Stomach (tissue), 19 donors: ENCODE measurements at regions of chr15 and their contacts with region 1.

Region 1: GRCh38 chr15:91852741-91853510 is 582 bp upstream of the SLCO3A1 start:
- DNase-seq: peak; percentile 76 to 85
- H3K4me3 ChIP-seq: peak overlapping the region; percentile 70 to 80 (median 76)
- H3K27ac ChIP-seq: peak overlapping the region; percentile 87 to 94 (median 93)
- H3K4me1 ChIP-seq: peaks cover 15 to 64% (median 43%) of the 10 kb centered on the region in 4 donors
- H3K27me3 ChIP-seq: peaks cover 0 to 3% (median 0%) of the 10 kb centered on the region in 3 donors
- CTCF ChIP-seq: peak in 5 of 7 experiments; percentile 45 to 90 (median 66)
- EP300 ChIP-seq: no peak
- POLR2A ChIP-seq: no peak

Region 2: GRCh38 chr15:91291673-91292072 is 561.3 kb before region 1 on chr15:
- intact Hi-C with region 1: loop called (anchors 10 kb)
- DNase-seq: peak in 1 of 2 donors; percentile 39
- H3K4me3 ChIP-seq: no peak overlapping the region
- H3K27ac ChIP-seq: no peak overlapping the region
- H3K4me1 ChIP-seq: no peaks in the 10 kb centered on the region
- H3K27me3 ChIP-seq: peaks cover 0 to 30% (median 7%) of the 10 kb centered on the region in 3 donors
- CTCF ChIP-seq: no peak
- EP300 ChIP-seq: no peak
- POLR2A ChIP-seq: no peak

Region 3: DNA sequence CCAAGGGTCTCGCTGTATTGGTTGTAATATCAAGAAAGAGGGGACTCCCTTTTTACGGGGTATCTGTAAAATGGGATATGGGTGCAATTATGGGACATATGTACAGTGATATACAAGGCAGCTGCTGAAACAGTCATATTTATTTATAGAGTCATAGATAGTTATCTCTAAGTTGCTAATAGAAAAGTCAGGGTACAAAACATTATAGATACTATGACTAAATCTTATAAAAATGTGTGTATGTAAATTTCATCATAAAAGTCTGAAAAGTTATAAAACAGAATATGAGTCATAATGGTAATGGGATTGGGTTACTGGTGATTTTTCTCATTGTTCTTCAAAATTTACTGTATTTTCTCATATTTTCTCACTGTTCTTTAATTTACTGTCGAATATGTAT is 344.3 kb before region 1 on chr15:
- intact Hi-C with region 1: no loop called
- DNase-seq: no peak
- H3K4me3 ChIP-seq: no peak overlapping the region
- H3K27ac ChIP-seq: no peak overlapping the region
- H3K4me1 ChIP-seq: no peaks in the 10 kb centered on the region
- H3K27me3 ChIP-seq: no peaks in the 10 kb centered on the region
- CTCF ChIP-seq: no peak
- EP300 ChIP-seq: no peak
- POLR2A ChIP-seq: no peak

Region 4: DNA sequence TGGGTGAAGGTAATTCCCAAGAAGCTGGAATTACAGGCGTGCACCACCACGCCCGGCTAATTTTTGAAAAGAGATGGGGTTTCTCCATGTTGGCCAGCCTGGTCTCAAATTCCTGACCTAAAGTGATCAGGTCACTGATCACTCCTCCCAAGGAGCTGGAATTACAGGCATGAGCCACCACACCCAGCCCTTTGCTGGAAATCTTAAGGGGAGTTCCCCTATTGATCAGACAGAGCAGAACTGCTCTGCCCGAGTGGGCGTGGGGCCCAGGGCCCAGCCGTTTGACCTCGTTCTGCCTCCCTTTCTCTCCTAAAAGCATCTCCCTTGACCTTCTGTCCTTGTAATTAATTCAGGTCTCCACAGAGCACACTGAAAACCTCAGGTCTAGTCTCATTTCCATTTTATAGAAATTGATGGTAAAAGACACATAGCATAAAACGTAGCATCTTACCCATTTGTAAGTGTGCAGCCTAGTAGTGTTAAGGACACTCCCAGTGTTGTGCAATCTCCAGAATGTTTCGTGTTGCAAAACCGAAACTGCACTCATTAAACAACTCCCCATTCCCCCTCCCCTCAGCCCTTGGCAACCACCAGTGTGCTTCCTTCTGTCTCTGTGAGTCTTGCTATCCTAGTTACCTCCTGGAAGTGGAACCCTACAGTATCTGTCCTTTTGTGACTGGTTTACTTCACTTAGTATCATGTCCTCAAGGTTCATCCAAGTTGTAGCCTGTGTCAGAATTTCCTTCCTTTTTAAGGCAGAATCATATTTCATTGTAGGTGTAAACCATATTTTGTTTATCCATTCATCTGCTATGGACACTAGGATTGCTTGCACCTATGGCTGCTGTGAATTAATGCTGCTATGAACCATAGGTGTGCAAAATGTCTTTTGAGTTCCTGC is 90.0 kb after region 1 on chr15:
- intact Hi-C with region 1: loop called (anchors 10 kb)
- DNase-seq: peak; percentile 72 to 95
- H3K4me3 ChIP-seq: peak overlapping the region in 1 of 4 donors; percentile 7
- H3K27ac ChIP-seq: peak overlapping the region; percentile 35 to 77 (median 72)
- H3K4me1 ChIP-seq: peaks cover 17 to 81% (median 48%) of the 10 kb centered on the region in 4 donors
- H3K27me3 ChIP-seq: no peaks in the 10 kb centered on the region
- CTCF ChIP-seq: no peak
- EP300 ChIP-seq: no peak
- POLR2A ChIP-seq: no peak

Region 5: GRCh38 chr15:92077353-92078085 is 224.6 kb after region 1 on chr15:
- intact Hi-C with region 1: loop called (anchors 5 kb)
- DNase-seq: peak; percentile 74 to 87
- H3K4me3 ChIP-seq: no peak overlapping the region
- H3K27ac ChIP-seq: no peak overlapping the region
- H3K4me1 ChIP-seq: peaks cover 5 to 44% (median 15%) of the 10 kb centered on the region in 4 donors
- H3K27me3 ChIP-seq: no peaks in the 10 kb centered on the region
- CTCF ChIP-seq: peak in 5 of 7 experiments; percentile 45 to 70 (median 62)
- EP300 ChIP-seq: no peak
- POLR2A ChIP-seq: no peak

Region 6: DNA sequence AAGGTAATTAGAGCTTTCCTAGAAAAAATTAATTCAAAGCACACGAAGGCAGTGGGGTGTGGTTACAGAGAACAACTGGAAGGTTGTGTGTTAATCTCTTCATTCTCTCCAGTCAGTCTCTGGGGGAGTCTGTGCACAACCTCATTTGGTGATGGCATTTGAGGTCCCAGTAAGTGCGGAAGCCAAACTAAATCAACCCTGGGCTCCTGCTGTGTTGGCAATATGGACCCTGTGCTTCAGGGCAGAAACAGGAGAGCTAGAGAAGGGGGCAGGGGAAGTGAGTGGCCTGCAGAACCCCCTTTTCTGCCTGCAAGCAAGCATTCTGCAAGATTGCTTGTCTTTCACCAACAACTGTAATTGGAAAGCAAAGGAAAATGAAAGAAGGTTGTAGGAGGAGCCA is 344.8 kb after region 1 on chr15:
- intact Hi-C with region 1: no loop called
- DNase-seq: no peak
- H3K4me3 ChIP-seq: no peak overlapping the region
- H3K27ac ChIP-seq: no peak overlapping the region
- H3K4me1 ChIP-seq: no peaks in the 10 kb centered on the region
- H3K27me3 ChIP-seq: no peaks in the 10 kb centered on the region
- CTCF ChIP-seq: no peak
- EP300 ChIP-seq: no peak
- POLR2A ChIP-seq: no peak